ENCODE measurements at regions of chr2 and their contacts with region 1.

Region 1: GRCh38 chr2:111116843-111117597 is 3.7 kb upstream of the BCL2L11 start:
- DNase-seq: peak; percentile 49 to 87 (median 66)
- ATAC-seq: peak; percentile 62
- H3K4me3 ChIP-seq: peak overlapping the region; percentile 95
- H3K4me3 Mint-ChIP-seq: peak overlapping the region; percentile 82
- H3K27ac ChIP-seq: no peak overlapping the region
- H3K27ac Mint-ChIP-seq: no peak overlapping the region
- H3K4me1 ChIP-seq: peaks cover 50% of the 10 kb centered on the region
- H3K4me1 Mint-ChIP-seq: peaks cover 33% of the 10 kb centered on the region
- H3K27me3 ChIP-seq: peaks cover 46 to 60% of the 10 kb centered on the region in 2 experiments
- H3K27me3 Mint-ChIP-seq: peaks cover 67% of the 10 kb centered on the region
- CTCF ChIP-seq: peak; percentile 79

Region 2: DNA sequence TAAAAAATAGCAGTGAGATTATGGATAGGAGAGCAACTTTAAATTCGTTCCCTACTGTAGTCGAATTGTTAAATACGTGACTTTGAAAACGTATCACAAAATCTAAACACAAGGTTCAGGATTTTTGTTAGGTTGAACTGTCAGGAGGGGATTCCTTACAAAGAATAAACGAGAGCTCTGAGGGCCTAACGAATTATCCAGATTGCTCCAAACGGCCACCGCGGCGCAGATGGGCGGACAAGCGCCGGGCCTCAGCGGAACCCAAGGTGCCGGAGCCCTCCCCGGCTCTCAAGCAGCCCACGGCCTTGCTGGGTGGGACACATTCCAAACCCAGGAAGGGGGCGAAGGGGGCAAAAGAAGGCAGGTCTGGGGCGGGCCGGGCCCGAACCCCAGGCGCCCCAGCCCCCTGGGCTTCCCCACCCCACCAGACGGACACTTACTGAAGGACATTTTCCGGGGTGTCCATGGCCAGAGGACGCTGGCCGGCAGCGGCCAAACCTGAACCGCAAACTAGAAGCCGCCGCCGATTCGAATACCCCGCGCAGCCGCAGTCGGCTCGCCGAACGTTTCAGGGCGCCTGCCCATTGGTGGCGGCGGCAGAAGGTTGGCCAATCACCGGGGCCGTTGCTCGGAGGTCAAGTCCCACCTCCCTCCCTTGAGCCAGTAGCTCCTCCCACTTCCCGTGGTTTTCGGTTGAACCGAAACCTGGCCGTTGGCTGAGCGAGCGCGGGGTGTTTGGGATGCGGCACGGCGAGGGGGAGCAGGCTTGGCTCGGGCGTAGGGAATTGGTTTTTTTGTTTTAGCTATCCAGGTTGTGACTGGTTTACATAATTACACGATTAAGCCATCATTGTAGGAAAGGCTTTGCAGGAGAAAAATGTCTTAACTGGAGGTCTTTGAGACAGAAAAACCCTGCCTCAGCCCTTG is 439.2 kb before region 1 on chr2 and contains the start of gene BUB1:
- CTCF ChIA-PET with region 1: no interaction called
- POLR2A ChIA-PET with region 1: interaction called, 3 read pairs
- intact Hi-C with region 1: loop called in 1 of 2 experiments (anchors 2 kb)
- DNase-seq: peak; percentile 90 to 98 (median 94)
- ATAC-seq: peak; percentile 98
- H3K4me3 ChIP-seq: peak within 1 kb of the TSS; percentile 93
- H3K4me3 Mint-ChIP-seq: peak within 1 kb of the TSS; percentile 98
- H3K27ac ChIP-seq: peak within 1 kb of the TSS; percentile 55 to 63
- H3K27ac Mint-ChIP-seq: peak within 1 kb of the TSS; percentile 89
- H3K4me1 ChIP-seq: peaks cover 27% of the 10 kb centered on the region
- H3K4me1 Mint-ChIP-seq: peaks cover 21% of the 10 kb centered on the region
- H3K27me3 ChIP-seq: no peaks in the 10 kb centered on the region
- H3K27me3 Mint-ChIP-seq: no peaks in the 10 kb centered on the region
- CTCF ChIP-seq: no peak
- total RNA-seq, gene BUB1: 1.6 to 3.5 TPM

Region 3: GRCh38 chr2:110818767-110819481 is 298.1 kb before region 1 on chr2:
- CTCF ChIA-PET with region 1: no interaction called
- POLR2A ChIA-PET with region 1: no interaction called
- intact Hi-C with region 1: loop called (anchors 5 to 10 kb)
- DNase-seq: peak in 1 of 14 experiments; percentile 1
- ATAC-seq: no peak
- H3K4me3 ChIP-seq: no peak overlapping the region
- H3K4me3 Mint-ChIP-seq: no peak overlapping the region
- H3K27ac ChIP-seq: no peak overlapping the region
- H3K27ac Mint-ChIP-seq: no peak overlapping the region
- H3K4me1 ChIP-seq: peaks cover 6% of the 10 kb centered on the region
- H3K4me1 Mint-ChIP-seq: no peaks in the 10 kb centered on the region
- H3K27me3 ChIP-seq: no peaks in the 10 kb centered on the region
- H3K27me3 Mint-ChIP-seq: peaks cover 5% of the 10 kb centered on the region
- CTCF ChIP-seq: no peak

Region 4: DNA sequence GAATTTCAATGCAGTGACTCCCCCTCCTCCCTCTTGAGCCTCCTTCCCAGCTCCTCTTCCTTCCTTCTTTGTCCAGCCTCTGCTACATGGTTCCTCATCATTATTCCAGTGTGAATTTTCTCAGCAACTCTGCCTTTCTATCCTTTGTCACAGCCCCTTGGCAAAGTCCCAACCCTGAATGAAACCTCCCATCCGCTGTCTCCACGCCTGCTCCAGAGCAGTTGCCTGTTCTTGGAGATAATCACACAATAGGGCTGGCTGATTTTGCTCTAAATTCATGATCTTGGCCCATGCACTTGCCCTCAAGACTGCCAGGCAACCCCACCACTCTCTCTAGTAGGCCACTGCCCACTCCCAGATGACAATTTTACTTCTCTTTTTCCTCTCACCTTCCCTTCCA is 65.1 kb after region 1 on chr2:
- CTCF ChIA-PET with region 1: no interaction called
- POLR2A ChIA-PET with region 1: no interaction called
- intact Hi-C with region 1: no loop called
- DNase-seq: no peak
- ATAC-seq: no peak
- H3K4me3 ChIP-seq: no peak overlapping the region
- H3K4me3 Mint-ChIP-seq: no peak overlapping the region
- H3K27ac ChIP-seq: no peak overlapping the region
- H3K27ac Mint-ChIP-seq: no peak overlapping the region
- H3K4me1 ChIP-seq: no peaks in the 10 kb centered on the region
- H3K4me1 Mint-ChIP-seq: no peaks in the 10 kb centered on the region
- H3K27me3 ChIP-seq: peaks cover 0 to 2% of the 10 kb centered on the region in 2 experiments
- H3K27me3 Mint-ChIP-seq: no peaks in the 10 kb centered on the region
- CTCF ChIP-seq: no peak

Region 5: DNA sequence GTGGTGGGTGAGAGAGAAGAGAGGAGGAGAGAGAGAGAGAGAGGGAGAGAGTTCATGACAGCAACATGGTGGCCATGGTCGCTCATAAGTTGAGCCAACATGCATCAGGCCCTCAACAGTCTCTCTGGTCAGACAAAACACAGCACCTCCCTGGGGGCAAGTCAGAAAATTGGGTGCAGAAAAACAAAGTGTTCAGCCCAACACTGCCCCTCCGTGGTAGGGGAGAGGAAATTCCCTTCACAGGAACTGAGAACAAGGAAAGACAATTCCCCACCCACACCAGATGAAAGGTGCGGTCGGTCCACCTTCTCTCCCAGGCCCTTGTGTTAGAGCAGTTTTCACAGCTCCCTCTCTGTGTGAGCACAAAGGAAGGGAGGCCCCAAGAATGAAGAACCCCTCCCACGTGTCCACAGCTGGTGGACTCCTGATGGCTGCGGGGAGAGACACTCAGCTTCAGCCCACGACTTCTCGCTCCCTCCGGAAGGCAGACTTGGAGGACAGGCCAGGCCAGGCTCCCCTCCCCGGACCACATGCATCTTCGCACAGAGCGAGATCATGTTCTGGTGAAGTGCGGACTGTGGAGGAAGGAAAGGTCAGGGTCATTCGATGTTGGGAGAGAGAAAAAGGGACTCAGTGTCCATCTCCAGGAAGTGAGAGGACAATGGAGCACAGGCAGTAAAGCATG is 585.2 kb after region 1 on chr2:
- CTCF ChIA-PET with region 1: no interaction called
- POLR2A ChIA-PET with region 1: no interaction called
- intact Hi-C with region 1: loop called in 1 of 2 experiments (anchors 1 kb)
- DNase-seq: peak; percentile 11 to 66 (median 28)
- ATAC-seq: no peak
- H3K4me3 ChIP-seq: no peak overlapping the region
- H3K4me3 Mint-ChIP-seq: no peak overlapping the region
- H3K27ac ChIP-seq: no peak overlapping the region
- H3K27ac Mint-ChIP-seq: no peak overlapping the region
- H3K4me1 ChIP-seq: peaks cover 39% of the 10 kb centered on the region
- H3K4me1 Mint-ChIP-seq: peaks cover 16% of the 10 kb centered on the region
- H3K27me3 ChIP-seq: no peaks in the 10 kb centered on the region
- H3K27me3 Mint-ChIP-seq: no peaks in the 10 kb centered on the region
- CTCF ChIP-seq: peak; percentile 41